ENCODE measurements at regions of chr3 and their contacts with region 1.

Region 1: DNA sequence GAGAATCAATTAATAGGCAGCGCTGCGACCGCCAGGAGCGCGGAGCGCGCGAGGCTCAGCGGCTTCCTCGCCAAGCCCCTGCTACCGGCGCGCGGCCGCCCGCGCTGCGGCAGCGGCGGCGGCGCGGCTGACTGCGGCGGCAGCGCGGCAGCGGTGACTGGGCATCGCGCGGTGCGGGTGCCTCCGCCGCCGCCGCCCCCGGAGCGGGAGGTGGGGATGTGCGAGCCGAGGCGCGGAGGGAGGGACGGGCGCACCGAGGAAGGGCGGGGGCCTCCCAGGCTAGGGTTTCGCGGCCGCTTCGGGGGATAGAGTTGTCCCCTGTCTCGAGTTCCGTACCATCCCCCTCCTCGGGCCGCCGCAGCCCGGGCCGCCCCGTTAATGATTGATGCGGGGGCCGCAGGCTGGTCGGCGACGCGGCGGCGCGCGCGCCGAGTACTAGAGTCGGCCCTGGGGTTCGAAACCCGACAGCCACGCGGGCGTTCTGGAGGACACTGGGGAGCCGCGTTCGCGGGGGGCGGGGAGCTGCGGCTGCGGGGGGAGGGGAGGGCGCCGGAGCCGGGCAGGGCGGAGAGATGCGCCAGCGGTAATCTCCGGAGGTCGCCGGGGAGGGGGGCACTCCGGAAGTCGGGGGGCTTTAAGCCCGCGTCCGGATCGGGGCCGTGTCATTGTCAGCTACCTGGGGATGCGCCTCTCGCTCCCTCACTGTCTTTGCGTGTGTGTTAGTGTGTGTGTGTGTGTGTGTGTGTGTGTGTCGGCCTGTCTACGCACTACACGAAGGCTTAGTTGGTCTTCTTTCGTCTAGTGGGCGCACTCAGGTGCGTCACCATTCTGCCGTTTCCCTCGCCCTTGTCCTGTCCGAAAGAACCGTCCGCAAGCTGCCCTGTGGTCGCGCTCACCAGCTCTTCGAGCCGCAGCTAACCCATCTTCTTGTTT is at the start of gene PAQR9:
- DNase-seq: peak; percentile 74
- ATAC-seq: peak; percentile 60
- total RNA-seq, gene PAQR9: 13.7 TPM

Region 2: DNA sequence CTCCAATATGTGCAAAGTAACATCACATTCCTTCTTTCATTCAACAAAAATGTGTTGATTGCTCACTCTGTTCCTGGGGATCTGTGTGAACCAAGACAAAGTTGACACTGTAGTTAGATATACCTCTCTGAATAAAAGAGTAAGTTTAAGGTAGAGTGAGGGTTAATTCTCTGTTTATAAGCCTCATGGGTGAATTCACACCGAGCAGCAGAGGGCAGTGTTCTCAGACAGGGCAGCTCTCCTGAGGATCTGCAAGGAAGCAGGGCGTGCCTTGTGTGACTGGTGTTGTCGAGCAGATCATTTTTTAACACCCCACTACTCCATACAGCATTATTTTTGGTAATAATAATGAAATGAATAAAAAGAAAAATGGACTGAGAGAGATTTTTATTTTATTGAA is 34.7 kb before region 1 on chr3:
- intact Hi-C with region 1: no loop called
- DNase-seq: no peak
- ATAC-seq: no peak

Region 3: DNA sequence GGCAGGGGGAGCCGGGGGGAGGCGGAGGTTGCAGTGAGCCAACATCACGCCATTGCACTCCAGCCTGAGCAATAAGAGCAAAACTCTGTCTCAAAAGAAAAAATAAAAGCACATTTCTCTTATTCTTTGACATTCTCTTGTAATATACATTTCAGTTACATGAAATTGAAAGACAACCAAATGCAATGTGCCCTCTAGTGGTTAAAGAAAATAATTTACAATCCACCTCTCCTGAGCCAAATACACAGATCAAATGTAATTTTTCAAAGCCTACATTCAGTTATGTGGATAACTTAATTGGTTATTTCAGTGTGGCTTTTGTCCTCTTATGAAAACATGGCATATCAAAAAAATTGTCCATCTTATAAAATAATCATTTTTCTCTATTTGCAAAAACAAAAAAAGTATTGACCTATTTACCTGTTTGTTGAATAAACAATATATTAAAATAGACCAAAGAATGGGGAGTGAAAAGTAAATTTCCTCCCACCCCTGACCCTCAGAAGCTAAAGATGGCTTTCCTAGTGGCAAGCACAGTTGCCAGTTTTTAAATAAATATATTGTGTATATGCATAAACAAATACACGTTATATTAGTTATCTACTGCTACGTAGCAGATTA is 23.4 kb after region 1 on chr3:
- intact Hi-C with region 1: loop called (anchors 2 kb)
- DNase-seq: no peak
- ATAC-seq: peak; percentile 51

Measured in Right ventricle myocardium inferior (tissue), 1 donor.